CD14-positive monocyte (primary cell): ENCODE measurements at regions of chr14 and their contacts with region 1.

Region 1: GRCh38 chr14:49767562-49768300 is at the start of gene KLHDC2:
- DNase-seq: peak; percentile 79 to 83 (median 80)
- H3K4me3 ChIP-seq: peak within 1 kb of the TSS; percentile 71 to 87 (median 83)
- H3K4me3 Mint-ChIP-seq: peak within 1 kb of the TSS; percentile 98
- H3K27ac ChIP-seq: peak within 1 kb of the TSS; percentile 91 to 92
- H3K27ac Mint-ChIP-seq: peak within 1 kb of the TSS; percentile 95 to 99 (median 98)
- H3K4me1 ChIP-seq: peaks cover 18 to 20% of the 10 kb centered on the region in 2 donors
- H3K4me1 Mint-ChIP-seq: peaks cover 34% of the 10 kb centered on the region
- H3K27me3 ChIP-seq: no peaks in the 10 kb centered on the region
- H3K27me3 Mint-ChIP-seq: peaks cover 0 to 1% (median under 1%) of the 10 kb centered on the region in 3 donors
- CTCF ChIP-seq: peak; percentile 39
- polyA plus RNA-seq, gene KLHDC2: 27.3 to 45.9 (median 43.1) TPM

Region 2: GRCh38 chr14:49461529-49462401 is 306.0 kb before region 1 on chr14:
- intact Hi-C with region 1: loop called in 1 of 2 experiments (anchors 5 kb)
- DNase-seq: peak; percentile 35 to 60 (median 47)
- H3K4me3 ChIP-seq: no peak overlapping the region
- H3K4me3 Mint-ChIP-seq: no peak overlapping the region
- H3K27ac ChIP-seq: no peak overlapping the region
- H3K27ac Mint-ChIP-seq: no peak overlapping the region
- H3K4me1 ChIP-seq: no peaks in the 10 kb centered on the region
- H3K4me1 Mint-ChIP-seq: no peaks in the 10 kb centered on the region
- H3K27me3 ChIP-seq: no peaks in the 10 kb centered on the region
- H3K27me3 Mint-ChIP-seq: peaks cover 0 to 2% (median 0%) of the 10 kb centered on the region in 3 donors
- CTCF ChIP-seq: peak; percentile 72

Region 3: DNA sequence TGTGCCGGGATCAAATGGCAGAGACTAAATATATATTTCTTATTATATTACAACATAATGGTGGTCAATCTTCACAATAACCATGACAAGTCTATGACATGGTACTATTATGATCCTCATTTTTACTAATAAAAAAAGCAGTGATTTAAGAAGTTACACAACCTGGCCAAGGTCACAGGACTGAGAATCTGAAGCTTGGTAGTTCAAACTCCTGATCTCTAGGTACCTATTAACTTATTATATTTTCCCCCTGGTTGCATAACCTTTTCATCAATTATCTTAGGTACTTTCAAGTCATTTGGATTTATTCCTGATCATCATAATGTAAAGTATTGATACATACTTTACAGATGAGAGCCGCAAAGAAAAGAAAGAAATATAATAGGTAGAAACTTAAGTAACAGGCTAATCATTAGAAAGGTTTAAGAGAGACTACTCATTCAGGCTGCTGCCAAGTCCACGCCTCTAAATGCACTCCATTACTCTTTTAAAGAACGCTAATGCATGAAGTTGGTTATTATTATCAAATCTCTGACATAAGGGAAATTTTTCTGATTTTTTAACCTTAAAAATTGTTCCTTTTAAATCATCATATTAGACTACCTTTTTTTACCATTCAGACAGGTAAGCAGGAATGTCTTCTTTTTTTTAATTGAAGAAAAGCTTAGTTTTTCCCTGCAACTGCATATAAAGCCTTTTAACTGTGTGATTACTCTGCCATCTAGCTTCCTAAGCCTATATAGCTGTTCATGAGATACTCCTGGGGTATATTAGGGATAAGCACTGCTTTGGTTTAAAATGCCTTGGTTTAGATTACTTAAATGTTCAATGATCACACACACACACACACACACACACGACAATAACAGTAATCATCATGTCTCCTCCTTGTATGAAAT is 217.2 kb before region 1 on chr14:
- intact Hi-C with region 1: no loop called
- DNase-seq: no peak
- H3K4me3 ChIP-seq: no peak overlapping the region
- H3K4me3 Mint-ChIP-seq: no peak overlapping the region
- H3K27ac ChIP-seq: no peak overlapping the region
- H3K27ac Mint-ChIP-seq: no peak overlapping the region
- H3K4me1 ChIP-seq: no peaks in the 10 kb centered on the region
- H3K4me1 Mint-ChIP-seq: no peaks in the 10 kb centered on the region
- H3K27me3 ChIP-seq: no peaks in the 10 kb centered on the region
- H3K27me3 Mint-ChIP-seq: peaks cover 0 to 6% (median 2%) of the 10 kb centered on the region in 3 donors
- CTCF ChIP-seq: no peak

Region 4: DNA sequence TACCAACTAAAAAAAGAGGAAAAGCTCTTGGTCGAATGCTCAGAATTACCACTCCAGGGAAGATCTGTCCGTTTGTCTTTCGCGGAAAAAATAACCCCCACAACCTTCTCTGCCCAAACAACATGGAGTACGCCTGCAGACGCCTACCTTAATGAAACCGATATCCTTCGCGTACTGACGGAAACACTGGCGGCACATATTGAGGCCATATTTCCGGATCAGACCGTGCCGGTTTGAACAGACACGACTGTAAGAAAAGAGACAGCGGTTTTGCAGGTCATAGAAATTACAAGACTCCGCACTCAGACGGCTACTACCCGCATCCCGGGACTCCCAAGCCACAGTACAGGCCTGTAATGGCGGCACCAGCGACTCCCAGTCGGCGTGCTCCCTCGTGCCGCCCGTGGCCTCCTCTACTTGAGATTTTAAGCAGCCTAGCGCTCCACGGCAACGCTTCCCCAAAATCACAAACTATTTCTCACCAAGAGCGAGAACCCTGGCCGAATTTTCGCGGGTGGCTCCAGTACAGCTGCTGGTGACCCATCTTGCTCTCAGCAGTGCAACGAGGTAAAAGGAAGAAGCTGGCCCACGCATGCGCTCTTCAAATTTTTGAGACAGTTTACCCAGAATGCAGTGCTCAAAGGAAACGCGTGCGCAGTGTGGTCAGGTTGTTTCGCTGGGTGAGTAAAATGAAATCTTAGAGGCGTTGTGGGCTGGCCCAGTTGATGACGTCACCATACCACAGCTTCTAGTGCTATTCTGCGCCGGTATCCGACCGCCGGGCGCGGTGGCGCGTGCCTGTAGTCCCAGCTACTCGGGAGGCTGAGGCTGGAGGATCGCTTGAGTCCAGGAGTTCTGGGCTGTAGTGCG is 181.7 kb before region 1 on chr14 and contains the start of gene RPS29:
- intact Hi-C with region 1: loop called in 1 of 2 experiments (anchors 5 kb)
- DNase-seq: peak; percentile 99
- H3K4me3 ChIP-seq: peak within 1 kb of the TSS; percentile 65 to 97 (median 87)
- H3K4me3 Mint-ChIP-seq: peak within 1 kb of the TSS; percentile 97 to 100
- H3K27ac ChIP-seq: peak within 1 kb of the TSS; percentile 93 to 95
- H3K27ac Mint-ChIP-seq: peak within 1 kb of the TSS; percentile 96 to 99 (median 98)
- H3K4me1 ChIP-seq: peaks cover 16 to 21% of the 10 kb centered on the region in 2 donors
- H3K4me1 Mint-ChIP-seq: peaks cover 37% of the 10 kb centered on the region
- H3K27me3 ChIP-seq: no peaks in the 10 kb centered on the region
- H3K27me3 Mint-ChIP-seq: peaks cover 0 to 3% (median 2%) of the 10 kb centered on the region in 3 donors
- CTCF ChIP-seq: no peak
- polyA plus RNA-seq, gene RPS29: 2,325 to 4,497 (median 2,965) TPM

Region 5: GRCh38 chr14:49620182-49621113 is 147.3 kb before region 1 on chr14 and contains the starts of genes MGAT2 and RPL36AL:
- intact Hi-C with region 1: loop called in 1 of 2 experiments (anchors 5 kb)
- DNase-seq: peak; percentile 98
- H3K4me3 ChIP-seq: peak within 1 kb of the TSS; percentile 75 to 81 (median 78)
- H3K4me3 Mint-ChIP-seq: peak within 1 kb of the TSS; percentile 92 to 98
- H3K27ac ChIP-seq: peak within 1 kb of the TSS; percentile 94 to 95
- H3K27ac Mint-ChIP-seq: peak within 1 kb of the TSS; percentile 97 to 99 (median 99)
- H3K4me1 ChIP-seq: peaks cover 30 to 51% of the 10 kb centered on the region in 2 donors
- H3K4me1 Mint-ChIP-seq: peaks cover 50% of the 10 kb centered on the region
- H3K27me3 ChIP-seq: no peaks in the 10 kb centered on the region
- H3K27me3 Mint-ChIP-seq: no peaks in the 10 kb centered on the region
- CTCF ChIP-seq: peak; percentile 27
- polyA plus RNA-seq, gene MGAT2: 8.9 to 38.0 (median 36.3) TPM
- polyA plus RNA-seq, gene RPL36AL: 237 to 454 (median 408) TPM

Region 6: DNA sequence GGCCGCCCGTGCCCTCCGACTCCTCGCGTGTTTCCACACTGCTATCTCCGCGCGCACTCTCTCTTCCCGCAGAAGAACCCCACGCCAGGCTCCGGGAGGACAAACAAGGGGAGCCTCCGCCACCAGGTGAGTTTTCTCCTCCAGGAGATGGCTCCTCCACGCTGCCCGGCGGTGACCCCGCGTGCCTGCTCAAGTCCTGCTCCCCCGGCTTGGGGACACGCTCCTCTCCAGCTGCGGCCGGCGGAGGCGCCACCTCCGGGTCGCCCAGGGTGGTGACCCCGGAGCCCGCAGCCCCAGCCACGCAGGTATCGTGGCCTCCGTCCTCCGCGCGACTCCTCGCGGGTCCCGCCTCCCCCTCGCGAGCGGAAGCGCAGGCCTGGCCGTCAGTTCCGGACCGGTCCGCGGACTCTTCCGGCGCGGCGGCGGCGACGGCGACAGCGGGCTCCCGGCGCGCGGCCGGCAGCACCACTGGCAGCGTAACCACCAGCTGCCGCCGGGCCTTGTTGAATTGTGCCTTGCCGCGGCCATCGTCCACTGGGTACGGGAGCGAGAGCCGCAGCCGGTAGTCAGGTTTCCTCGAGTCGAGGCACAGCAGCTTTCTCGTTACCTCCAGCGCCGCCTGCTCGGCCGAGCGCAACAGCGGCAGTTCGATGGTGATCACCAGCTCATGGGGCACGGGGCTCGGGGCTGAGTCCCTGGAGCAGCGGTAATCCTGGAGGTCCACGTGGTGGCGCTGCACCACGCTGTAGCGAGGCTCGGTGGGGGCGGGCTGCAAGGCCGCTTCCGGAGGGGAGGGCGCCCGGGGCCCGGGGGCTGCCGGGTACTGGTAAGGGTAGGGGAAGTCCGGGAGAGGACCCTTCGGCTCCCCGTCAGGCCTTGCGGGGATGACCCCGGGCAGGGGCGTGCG is 133.8 kb before region 1 on chr14:
- intact Hi-C with region 1: loop called in 1 of 2 experiments (anchors 10 kb)
- DNase-seq: peak; percentile 85 to 90 (median 87)
- H3K4me3 ChIP-seq: peak overlapping the region; percentile 72 to 97 (median 92)
- H3K4me3 Mint-ChIP-seq: peak overlapping the region; percentile 98 to 99
- H3K27ac ChIP-seq: peak overlapping the region; percentile 91 to 95
- H3K27ac Mint-ChIP-seq: peak overlapping the region; percentile 88 to 95 (median 93)
- H3K4me1 ChIP-seq: peaks cover 27 to 42% of the 10 kb centered on the region in 2 donors
- H3K4me1 Mint-ChIP-seq: peaks cover 51% of the 10 kb centered on the region
- H3K27me3 ChIP-seq: no peaks in the 10 kb centered on the region
- H3K27me3 Mint-ChIP-seq: peaks cover 0 to 6% (median 0%) of the 10 kb centered on the region in 3 donors
- CTCF ChIP-seq: peak; percentile 93

Region 7: GRCh38 chr14:49692811-49693734 is 74.7 kb before region 1 on chr14 and contains the start of gene KLHDC1:
- intact Hi-C with region 1: loop called in 1 of 2 experiments (anchors 5 kb)
- DNase-seq: peak; percentile 59 to 63 (median 63)
- H3K4me3 ChIP-seq: peak within 1 kb of the TSS; percentile 78 to 90 (median 82)
- H3K4me3 Mint-ChIP-seq: peak within 1 kb of the TSS; percentile 92 to 94
- H3K27ac ChIP-seq: peak within 1 kb of the TSS; percentile 66 to 78
- H3K27ac Mint-ChIP-seq: peak within 1 kb of the TSS; percentile 58 to 86 (median 83)
- H3K4me1 ChIP-seq: peaks cover 9 to 20% of the 10 kb centered on the region in 2 donors
- H3K4me1 Mint-ChIP-seq: peaks cover 29% of the 10 kb centered on the region
- H3K27me3 ChIP-seq: no peaks in the 10 kb centered on the region
- H3K27me3 Mint-ChIP-seq: peaks cover 0 to 5% (median 3%) of the 10 kb centered on the region in 3 donors
- CTCF ChIP-seq: no peak
- polyA plus RNA-seq, gene KLHDC1: 0.92 to 1.6 (median 1.5) TPM

Region 8: DNA sequence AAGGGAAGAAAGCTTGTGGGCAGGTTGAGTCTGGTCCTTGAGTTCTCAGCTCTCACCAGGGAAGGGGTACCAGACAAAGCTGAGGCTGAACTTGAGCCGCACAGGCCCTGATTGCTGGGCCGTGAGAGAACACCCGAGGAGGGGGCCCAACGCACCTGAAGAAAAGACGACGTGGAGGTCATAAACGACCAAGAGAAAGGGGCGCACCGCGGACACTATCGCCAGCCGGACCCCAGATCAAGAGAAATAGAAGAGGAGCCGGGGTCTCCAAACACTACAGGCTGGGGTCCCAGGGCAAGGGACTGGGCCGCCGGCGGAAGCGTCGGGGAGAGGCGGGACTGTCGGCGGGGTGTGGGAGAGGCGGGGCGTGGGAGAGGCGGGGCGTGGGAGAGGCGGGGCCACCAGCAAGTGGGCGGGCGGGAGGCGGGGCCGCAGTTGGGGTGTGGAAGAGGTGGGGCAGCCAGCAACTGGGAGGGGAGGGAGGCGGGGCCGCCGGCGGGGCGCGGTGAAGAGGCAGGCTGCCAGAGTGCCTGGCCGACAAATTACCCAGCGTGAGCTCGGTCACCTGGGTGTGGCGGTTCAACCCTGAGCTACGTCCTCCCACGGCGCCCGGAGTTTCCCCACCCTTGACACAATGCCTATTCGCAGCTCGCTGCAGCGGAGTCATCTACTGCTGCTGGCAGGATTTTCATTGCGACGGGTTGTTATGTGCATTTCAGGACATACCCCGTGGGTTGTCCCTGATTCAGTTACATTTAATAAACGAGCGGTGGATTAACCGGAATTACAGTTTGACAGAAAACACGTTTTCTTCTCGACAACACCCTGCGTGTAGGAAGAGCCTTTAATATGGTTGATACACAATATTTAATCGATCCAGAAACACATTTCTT is 100.3 kb after region 1 on chr14:
- intact Hi-C with region 1: no loop called
- DNase-seq: peak; percentile 97 to 99 (median 99)
- H3K4me3 ChIP-seq: peak overlapping the region; percentile 63 to 80 (median 70)
- H3K4me3 Mint-ChIP-seq: peak overlapping the region; percentile 87 to 95
- H3K27ac ChIP-seq: peak overlapping the region; percentile 81 to 96
- H3K27ac Mint-ChIP-seq: peak overlapping the region; percentile 97 to 99 (median 98)
- H3K4me1 ChIP-seq: peaks cover 51 to 59% of the 10 kb centered on the region in 2 donors
- H3K4me1 Mint-ChIP-seq: peaks cover 32% of the 10 kb centered on the region
- H3K27me3 ChIP-seq: no peaks in the 10 kb centered on the region
- H3K27me3 Mint-ChIP-seq: no peaks in the 10 kb centered on the region
- CTCF ChIP-seq: no peak